Ovary (tissue), 10 donors: ENCODE measurements at regions of chr16 and their contacts with region 1.

Region 1: GRCh38 chr16:7456211-7456610 is 123.6 kb downstream of the RBFOX1 start:
- DNase-seq: no peak
- H3K4me3 ChIP-seq: no peak overlapping the region
- H3K27ac ChIP-seq: no peak overlapping the region
- H3K4me1 ChIP-seq: no peaks in the 10 kb centered on the region
- H3K27me3 ChIP-seq: no peaks in the 10 kb centered on the region
- CTCF ChIP-seq: no peak
- EP300 ChIP-seq: no peak
- POLR2A ChIP-seq: no peak

Region 2: DNA sequence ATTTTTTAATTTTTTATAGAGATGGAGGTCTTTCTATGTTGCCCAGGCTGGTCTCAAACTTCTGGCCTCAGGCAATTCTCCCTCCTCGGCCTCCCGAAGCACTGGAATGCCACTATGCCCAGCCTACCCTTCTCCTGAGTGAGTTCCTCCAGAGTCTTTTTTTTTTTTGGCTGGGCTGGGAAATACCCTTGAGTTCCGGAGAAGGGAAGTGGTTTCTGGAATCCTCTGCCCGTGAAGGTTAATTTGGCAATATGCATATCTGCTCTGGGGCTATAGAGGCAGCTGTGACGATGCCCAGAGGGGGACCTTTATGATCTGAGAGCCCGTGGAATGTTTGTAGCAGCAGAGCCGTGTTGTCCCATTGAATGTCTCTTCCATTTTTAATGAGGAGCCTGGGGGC is 93.9 kb after region 1 on chr16:
- intact Hi-C with region 1: loop called in 1 of 4 experiments (anchors 10 kb)
- DNase-seq: no peak
- H3K4me3 ChIP-seq: no peak overlapping the region
- H3K27ac ChIP-seq: no peak overlapping the region
- H3K4me1 ChIP-seq: no peaks in the 10 kb centered on the region
- H3K27me3 ChIP-seq: no peaks in the 10 kb centered on the region
- CTCF ChIP-seq: no peak
- EP300 ChIP-seq: no peak
- POLR2A ChIP-seq: no peak